Caco-2 (cell line): ENCODE measurements at regions of chr5 and their contacts with region 1.

Region 1: GRCh38 chr5:95961617-95962474 is at the start of gene ELL2:
- DNase-seq: peak; percentile 99 to 100
- H3K4me3 ChIP-seq: peak within 1 kb of the TSS; percentile 99
- H3K4me3 Mint-ChIP-seq: peak within 1 kb of the TSS; percentile 86
- H3K27ac Mint-ChIP-seq: peak within 1 kb of the TSS; percentile 98
- H3K4me1 ChIP-seq: peaks cover 48% of the 10 kb centered on the region
- H3K4me1 Mint-ChIP-seq: peaks cover 37% of the 10 kb centered on the region
- H3K27me3 ChIP-seq: no peaks in the 10 kb centered on the region
- H3K27me3 Mint-ChIP-seq: no peaks in the 10 kb centered on the region
- CTCF ChIP-seq: no peak
- total RNA-seq, gene ELL2: 78.1 and 81.0 TPM in 2 replicates

Region 2: DNA sequence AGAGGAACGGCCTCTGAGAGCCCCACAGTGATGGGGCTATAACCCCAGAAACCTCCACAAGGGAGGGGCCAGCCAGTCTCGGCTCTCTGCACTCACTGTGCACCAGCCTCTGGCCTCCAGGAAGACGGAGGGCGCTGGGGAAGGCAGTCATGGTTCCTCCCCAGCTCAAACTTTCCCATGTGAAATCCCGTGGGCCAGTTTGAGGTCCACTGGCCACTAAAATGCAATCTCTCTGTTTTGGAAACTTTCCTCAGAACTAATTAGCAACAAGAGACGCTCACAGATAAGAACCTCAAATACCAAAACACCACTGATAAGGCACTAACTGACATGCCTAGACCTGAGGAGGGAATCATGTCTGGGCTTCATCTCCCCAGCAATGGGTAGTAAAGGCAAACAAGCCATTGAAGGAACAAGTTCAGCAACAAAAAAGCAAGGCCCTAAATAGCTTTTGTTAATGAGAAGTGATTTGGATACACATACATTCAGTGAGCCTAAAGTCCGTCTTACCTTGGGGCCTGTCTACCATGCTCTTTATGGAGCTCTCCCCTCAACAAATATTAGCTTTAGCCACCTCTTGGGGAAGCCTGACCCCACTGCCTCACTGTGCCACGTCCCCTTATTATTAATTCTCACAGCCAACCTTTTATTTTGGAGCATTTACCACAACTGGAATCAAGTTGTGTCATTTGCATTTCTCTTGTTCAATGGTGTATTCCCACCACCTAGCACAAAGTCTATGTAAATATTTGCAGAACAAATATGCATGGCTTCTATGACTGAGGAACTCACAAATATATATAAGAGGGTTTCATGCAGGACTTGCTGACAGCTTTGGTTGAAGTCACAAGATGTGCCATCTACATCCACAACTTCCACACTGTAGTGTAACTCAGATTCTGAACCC is 83.2 kb before region 1 on chr5:
- CTCF ChIA-PET with region 1: interaction called, 4 read pairs
- POLR2A ChIA-PET with region 1: interaction called, 3 read pairs
- intact Hi-C with region 1: loop called (anchors 5 kb)
- DNase-seq: peak; percentile 72 to 82
- H3K4me3 ChIP-seq: no peak overlapping the region
- H3K4me3 Mint-ChIP-seq: peak overlapping the region; percentile 17
- H3K27ac Mint-ChIP-seq: peak overlapping the region; percentile 80
- H3K4me1 ChIP-seq: peaks cover 43% of the 10 kb centered on the region
- H3K4me1 Mint-ChIP-seq: peaks cover 35% of the 10 kb centered on the region
- H3K27me3 ChIP-seq: no peaks in the 10 kb centered on the region
- H3K27me3 Mint-ChIP-seq: no peaks in the 10 kb centered on the region
- CTCF ChIP-seq: no peak

Region 3: DNA sequence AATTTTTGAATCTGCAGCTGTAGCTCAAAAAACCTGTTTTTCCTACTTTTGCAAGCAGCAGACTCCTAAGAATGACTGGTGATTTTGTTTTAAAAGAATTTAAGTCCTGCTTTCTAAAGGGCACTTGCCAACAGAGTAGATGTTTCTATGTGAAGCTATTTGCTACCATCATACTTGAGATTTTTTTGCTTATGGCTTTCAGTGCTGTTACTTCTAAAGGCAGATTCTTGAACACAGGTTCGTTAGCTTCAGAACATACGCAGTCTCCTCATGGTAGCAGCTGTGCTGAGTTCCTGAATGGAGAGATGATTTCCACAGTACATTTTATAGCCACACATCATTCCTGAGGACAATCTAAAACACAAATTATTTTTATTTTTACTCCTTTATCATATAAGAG is 24.2 kb after region 1 on chr5:
- CTCF ChIA-PET with region 1: interaction called, 5 read pairs
- POLR2A ChIA-PET with region 1: interaction called, 18 read pairs
- intact Hi-C with region 1: loop called (anchors 1 kb)
- DNase-seq: no peak
- H3K4me3 ChIP-seq: no peak overlapping the region
- H3K4me3 Mint-ChIP-seq: no peak overlapping the region
- H3K27ac Mint-ChIP-seq: peak overlapping the region; percentile 85
- H3K4me1 ChIP-seq: peaks cover 74% of the 10 kb centered on the region
- H3K4me1 Mint-ChIP-seq: peaks cover 9% of the 10 kb centered on the region
- H3K27me3 ChIP-seq: no peaks in the 10 kb centered on the region
- H3K27me3 Mint-ChIP-seq: no peaks in the 10 kb centered on the region
- CTCF ChIP-seq: no peak

Region 4: DNA sequence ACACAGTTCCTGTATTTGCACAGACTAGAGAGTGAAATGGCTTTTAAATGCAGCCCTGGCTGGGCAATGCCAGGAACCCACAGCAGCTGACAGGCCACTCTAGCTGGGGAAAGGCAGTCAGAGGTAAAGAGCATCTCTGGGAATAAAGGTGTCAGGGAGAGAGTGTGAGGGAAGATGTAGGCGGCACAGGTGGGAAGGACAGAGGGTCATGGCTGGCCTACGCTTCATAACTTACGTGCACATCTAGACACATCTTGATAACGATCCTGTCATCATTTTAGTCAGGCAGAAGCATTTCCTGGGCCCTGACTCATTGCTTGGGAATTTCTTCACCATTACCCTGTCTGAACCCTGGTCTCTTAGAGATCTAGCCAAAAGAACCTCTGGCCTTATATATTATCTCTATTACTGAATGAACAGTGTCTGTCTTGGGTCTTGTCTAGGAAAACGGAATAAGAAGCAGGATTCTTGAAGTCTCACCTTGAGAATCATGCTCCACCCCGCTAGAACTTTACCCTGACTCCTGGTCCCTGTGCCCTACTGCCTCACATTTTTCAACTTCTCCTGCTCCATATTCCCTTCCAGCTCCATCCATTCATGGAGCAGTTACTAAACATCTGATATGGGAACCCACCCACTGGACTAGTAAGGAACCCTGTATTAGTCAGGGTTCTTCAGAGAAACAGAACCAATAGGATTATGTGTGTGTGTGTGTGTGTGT is 106.2 kb after region 1 on chr5:
- CTCF ChIA-PET with region 1: no interaction called
- POLR2A ChIA-PET with region 1: no interaction called
- intact Hi-C with region 1: loop called (anchors 5 kb)
- DNase-seq: peak; percentile 47 to 73
- H3K4me3 ChIP-seq: no peak overlapping the region
- H3K4me3 Mint-ChIP-seq: no peak overlapping the region
- H3K27ac Mint-ChIP-seq: peak overlapping the region; percentile 69
- H3K4me1 ChIP-seq: peaks cover 29% of the 10 kb centered on the region
- H3K4me1 Mint-ChIP-seq: peaks cover 34% of the 10 kb centered on the region
- H3K27me3 ChIP-seq: no peaks in the 10 kb centered on the region
- H3K27me3 Mint-ChIP-seq: no peaks in the 10 kb centered on the region
- CTCF ChIP-seq: no peak

Region 5: DNA sequence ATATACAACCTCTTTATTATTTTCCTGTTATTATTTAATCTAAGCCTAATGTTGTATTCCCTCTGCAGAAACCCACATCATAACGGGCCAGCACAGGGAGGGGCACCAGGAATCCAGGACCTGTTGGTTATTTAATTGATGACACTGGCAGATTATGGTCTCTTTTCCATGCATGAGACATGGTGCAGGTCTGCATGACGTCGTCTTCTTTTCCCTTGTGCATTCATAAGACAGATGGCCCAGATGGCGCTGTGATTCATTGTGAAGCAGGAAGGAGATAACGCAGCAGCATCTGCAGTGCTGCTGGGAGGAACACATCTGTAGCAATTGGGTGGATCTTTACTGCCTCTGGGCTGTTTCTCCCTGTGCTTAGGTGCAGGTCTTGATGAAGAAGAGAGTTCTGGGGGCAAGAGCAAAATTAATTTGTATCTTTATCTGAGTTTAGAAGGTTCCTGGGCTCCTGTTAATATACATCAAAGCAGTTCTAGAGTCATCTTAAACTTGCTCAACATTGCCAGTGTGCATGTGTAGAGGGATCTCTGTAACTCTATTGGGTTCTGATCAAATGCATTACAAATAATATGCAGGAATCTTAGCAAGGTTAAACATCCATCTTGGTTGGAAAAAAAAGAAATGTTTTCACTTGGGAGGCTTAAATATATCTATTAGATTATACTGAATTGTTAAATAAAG is 295.1 kb after region 1 on chr5:
- CTCF ChIA-PET with region 1: no interaction called
- POLR2A ChIA-PET with region 1: no interaction called
- intact Hi-C with region 1: no loop called
- DNase-seq: peak; percentile 49 to 63
- H3K4me3 ChIP-seq: no peak overlapping the region
- H3K4me3 Mint-ChIP-seq: no peak overlapping the region
- H3K27ac Mint-ChIP-seq: no peak overlapping the region
- H3K4me1 ChIP-seq: peaks cover 6% of the 10 kb centered on the region; the same call in 1 of the 2 replicates
- H3K4me1 Mint-ChIP-seq: peaks cover 10% of the 10 kb centered on the region
- H3K27me3 ChIP-seq: no peaks in the 10 kb centered on the region
- H3K27me3 Mint-ChIP-seq: no peaks in the 10 kb centered on the region
- CTCF ChIP-seq: peak in 1 of 2 experiments; percentile 32

Region 6: DNA sequence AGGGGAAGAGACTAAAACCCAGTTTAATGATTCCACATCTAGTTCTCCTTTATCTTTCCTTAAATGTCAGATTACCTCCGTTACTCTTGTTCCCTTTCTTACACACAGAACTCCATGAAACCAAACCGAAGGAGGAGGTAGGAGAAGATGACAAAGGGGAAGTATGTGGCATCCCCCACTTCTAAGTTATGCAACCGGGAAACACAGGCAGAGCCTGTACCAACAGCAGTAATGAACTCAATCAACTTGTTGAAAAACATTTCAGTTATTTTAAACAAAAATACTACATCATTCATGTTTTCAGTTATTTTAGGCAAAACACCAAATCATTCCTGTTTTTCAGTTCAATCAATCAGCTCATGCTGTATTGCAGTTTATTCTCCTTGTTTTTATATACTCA is 369.4 kb after region 1 on chr5:
- CTCF ChIA-PET with region 1: interaction called, 14 read pairs
- POLR2A ChIA-PET with region 1: no interaction called
- intact Hi-C with region 1: loop called (anchors 1 kb)
- DNase-seq: no peak
- H3K4me3 ChIP-seq: no peak overlapping the region
- H3K4me3 Mint-ChIP-seq: no peak overlapping the region
- H3K27ac Mint-ChIP-seq: no peak overlapping the region
- H3K4me1 ChIP-seq: peaks cover 35% of the 10 kb centered on the region
- H3K4me1 Mint-ChIP-seq: peaks cover 29% of the 10 kb centered on the region
- H3K27me3 ChIP-seq: no peaks in the 10 kb centered on the region
- H3K27me3 Mint-ChIP-seq: no peaks in the 10 kb centered on the region
- CTCF ChIP-seq: no peak